Colonic mucosa (tissue), 4 donors: ENCODE measurements at regions of chr14 and their contacts with region 1.

Region 1: GRCh38 chr14:105045710-105046326 is 19.4 kb downstream of the GPR132 start:
- DNase-seq: peak; percentile 93
- H3K4me3 ChIP-seq: no peak overlapping the region
- H3K27ac ChIP-seq: no peak overlapping the region
- H3K4me1 ChIP-seq: no peaks in the 10 kb centered on the region
- H3K27me3 ChIP-seq: no peaks in the 10 kb centered on the region
- CTCF ChIP-seq: peak; percentile 100

Region 2: GRCh38 chr14:104895786-104896661 is 149.8 kb before region 1 on chr14:
- intact Hi-C with region 1: loop called (anchors 5 kb)
- DNase-seq: peak; percentile 18
- H3K4me3 ChIP-seq: no peak overlapping the region
- H3K27ac ChIP-seq: no peak overlapping the region
- H3K4me1 ChIP-seq: no peaks in the 10 kb centered on the region
- H3K27me3 ChIP-seq: no peaks in the 10 kb centered on the region
- CTCF ChIP-seq: no peak